Breast epithelium (tissue), 4 donors: ENCODE measurements at regions of chr13 and their contacts with region 1.

Region 1: DNA sequence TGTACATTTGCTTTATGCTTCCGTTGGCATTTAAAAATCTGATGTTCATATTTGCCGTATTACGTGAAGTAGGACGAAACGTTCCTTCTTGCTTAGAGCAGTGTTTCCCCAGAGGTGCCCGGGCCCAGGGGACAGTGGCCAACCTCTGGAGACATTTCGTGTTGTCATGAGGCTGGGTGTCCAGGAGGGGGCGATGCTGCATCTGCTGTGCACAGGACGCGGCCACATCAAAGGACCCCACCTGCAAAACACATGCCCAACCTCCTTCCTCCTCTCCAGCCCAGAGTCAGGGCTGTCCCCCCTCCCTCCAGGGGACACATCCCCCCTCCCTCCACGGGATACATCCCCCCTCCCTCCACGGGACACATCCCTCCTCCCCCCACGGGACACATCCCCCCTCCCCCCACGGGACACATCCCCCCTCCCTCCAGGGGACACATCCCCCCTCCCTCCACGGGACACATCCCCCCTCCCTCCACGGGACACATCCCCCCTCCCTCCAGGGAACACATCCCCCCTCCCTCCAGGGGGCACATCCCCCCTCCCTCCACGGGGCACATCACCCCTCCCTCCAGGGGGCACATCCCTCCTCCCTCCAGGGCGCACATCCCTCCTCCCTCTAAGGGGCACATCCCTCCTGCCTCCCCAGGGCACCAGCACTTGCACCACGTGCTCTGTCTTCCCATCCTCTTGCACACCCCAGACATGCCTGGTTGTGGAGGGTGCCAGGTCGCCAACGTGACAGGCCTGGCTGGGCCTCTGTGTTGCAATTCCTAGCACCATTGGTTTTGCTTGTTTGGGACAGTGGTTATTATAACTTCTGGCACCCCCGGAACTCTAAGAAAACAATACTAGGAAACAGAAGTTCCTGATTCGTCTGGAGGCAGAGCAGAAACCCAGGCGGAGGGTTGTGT is 46.7 kb downstream of the GAS6 start:
- DNase-seq: peak; percentile 88 to 94
- H3K4me3 ChIP-seq: no peak overlapping the region
- H3K27ac ChIP-seq: peak overlapping the region; percentile 71 to 75
- H3K4me1 ChIP-seq: peaks cover 15 to 35% of the 10 kb centered on the region in 2 donors
- H3K27me3 ChIP-seq: peaks cover 0 to 2% of the 10 kb centered on the region in 2 donors
- CTCF ChIP-seq: peak; percentile 88 to 93 (median 91)
- POLR2A ChIP-seq: no peak

Region 2: GRCh38 chr13:113140677-113141600 is 676.3 kb before region 1 on chr13:
- intact Hi-C with region 1: no loop called
- DNase-seq: peak; percentile 31 to 45
- H3K4me3 ChIP-seq: no peak overlapping the region
- H3K27ac ChIP-seq: no peak overlapping the region
- H3K4me1 ChIP-seq: no peaks in the 10 kb centered on the region
- H3K27me3 ChIP-seq: no peaks in the 10 kb centered on the region
- CTCF ChIP-seq: no peak
- POLR2A ChIP-seq: no peak

Region 3: GRCh38 chr13:113947321-113948033 is 130.3 kb after region 1 on chr13:
- intact Hi-C with region 1: loop called (anchors 10 kb)
- DNase-seq: peak in 1 of 2 donors; percentile 72
- H3K4me3 ChIP-seq: no peak overlapping the region
- H3K27ac ChIP-seq: peak overlapping the region in 1 of 2 donors; percentile 48
- H3K4me1 ChIP-seq: peaks cover 0 to 5% of the 10 kb centered on the region in 2 donors
- H3K27me3 ChIP-seq: no peaks in the 10 kb centered on the region
- CTCF ChIP-seq: peak; percentile 57 to 83 (median 82)
- POLR2A ChIP-seq: no peak

Region 4: GRCh38 chr13:114281351-114282040 is 464.3 kb after region 1 on chr13 and contains the start of gene UPF3A:
- intact Hi-C with region 1: no loop called
- DNase-seq: peak; percentile 85 to 91
- H3K4me3 ChIP-seq: peak within 1 kb of the TSS; percentile 72 to 77 (median 76)
- H3K27ac ChIP-seq: peak within 1 kb of the TSS; percentile 96 to 98
- H3K4me1 ChIP-seq: peaks cover 3 to 8% of the 10 kb centered on the region in 2 donors
- H3K27me3 ChIP-seq: no peaks in the 10 kb centered on the region
- CTCF ChIP-seq: no peak
- POLR2A ChIP-seq: peak; percentile 68
- total RNA-seq, gene UPF3A: 48.5 to 52.8 (median 49.6) TPM